Panc1 (cell line): ENCODE measurements at regions of chr2 and their contacts with region 1.

Region 1: DNA sequence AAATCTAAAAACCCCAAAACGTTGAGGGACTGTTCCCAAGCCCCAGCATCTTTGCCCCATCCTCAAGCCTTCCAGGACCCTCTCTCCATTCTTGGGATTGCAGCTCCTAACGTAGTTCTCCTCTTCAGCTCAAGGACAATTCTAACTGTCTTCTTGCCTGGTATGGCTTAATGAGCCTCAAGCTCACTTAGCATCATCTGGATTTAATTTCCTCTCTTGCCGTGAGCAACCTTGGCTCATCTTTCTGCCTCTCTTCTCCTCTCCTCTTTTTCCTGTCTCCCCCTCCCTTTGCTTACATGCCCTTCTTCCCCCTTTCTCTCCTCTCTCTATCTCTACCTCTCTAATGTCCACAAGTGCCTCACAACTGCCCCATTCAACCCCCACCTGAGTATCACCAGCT is 44.2 kb downstream of the TACR1 start:
- DNase-seq: no peak
- ATAC-seq: no peak
- H3K4me3 ChIP-seq: no peak overlapping the region
- H3K27ac ChIP-seq: no peak overlapping the region
- H3K4me1 ChIP-seq: no peaks in the 10 kb centered on the region
- H3K27me3 ChIP-seq: no peaks in the 10 kb centered on the region
- CTCF ChIP-seq: no peak

Region 2: GRCh38 chr2:74991977-74992376 is 163.1 kb before region 1 on chr2:
- CTCF ChIA-PET with region 1: interaction called, 11 read pairs
- POLR2A ChIA-PET with region 1: no interaction called
- in situ Hi-C with region 1: no loop called
- intact Hi-C with region 1: no loop called
- DNase-seq: no peak
- ATAC-seq: no peak
- H3K4me3 ChIP-seq: no peak overlapping the region
- H3K27ac ChIP-seq: no peak overlapping the region
- H3K4me1 ChIP-seq: no peaks in the 10 kb centered on the region
- H3K27me3 ChIP-seq: no peaks in the 10 kb centered on the region
- CTCF ChIP-seq: no peak

Region 3: DNA sequence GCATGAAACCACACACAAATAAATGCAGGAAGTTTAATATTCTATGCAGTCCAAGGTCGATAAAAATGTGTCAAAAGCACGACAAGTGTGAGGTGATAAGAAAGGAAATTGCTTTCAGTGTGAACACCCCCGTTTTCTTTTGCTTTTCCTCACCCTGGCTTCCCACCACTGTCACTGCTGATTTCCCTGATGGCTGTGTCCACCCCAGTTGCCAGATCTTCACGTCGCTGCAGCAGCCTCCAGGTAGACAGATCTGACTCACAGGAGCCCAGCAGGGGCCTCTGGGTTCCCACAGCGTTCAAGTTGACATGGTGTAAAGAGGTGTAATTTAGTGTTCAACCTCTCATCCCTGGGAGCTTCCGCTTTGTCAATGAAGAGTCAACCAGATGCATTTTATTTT is 172.2 kb after region 1 on chr2:
- CTCF ChIA-PET with region 1: no interaction called
- POLR2A ChIA-PET with region 1: no interaction called
- in situ Hi-C with region 1: no loop called
- intact Hi-C with region 1: no loop called
- DNase-seq: no peak
- ATAC-seq: no peak
- H3K4me3 ChIP-seq: no peak overlapping the region
- H3K27ac ChIP-seq: no peak overlapping the region
- H3K4me1 ChIP-seq: no peaks in the 10 kb centered on the region
- H3K27me3 ChIP-seq: no peaks in the 10 kb centered on the region
- CTCF ChIP-seq: no peak